A549 (cell line): ENCODE measurements at regions of chr4 and their contacts with region 1.

Region 1: DNA sequence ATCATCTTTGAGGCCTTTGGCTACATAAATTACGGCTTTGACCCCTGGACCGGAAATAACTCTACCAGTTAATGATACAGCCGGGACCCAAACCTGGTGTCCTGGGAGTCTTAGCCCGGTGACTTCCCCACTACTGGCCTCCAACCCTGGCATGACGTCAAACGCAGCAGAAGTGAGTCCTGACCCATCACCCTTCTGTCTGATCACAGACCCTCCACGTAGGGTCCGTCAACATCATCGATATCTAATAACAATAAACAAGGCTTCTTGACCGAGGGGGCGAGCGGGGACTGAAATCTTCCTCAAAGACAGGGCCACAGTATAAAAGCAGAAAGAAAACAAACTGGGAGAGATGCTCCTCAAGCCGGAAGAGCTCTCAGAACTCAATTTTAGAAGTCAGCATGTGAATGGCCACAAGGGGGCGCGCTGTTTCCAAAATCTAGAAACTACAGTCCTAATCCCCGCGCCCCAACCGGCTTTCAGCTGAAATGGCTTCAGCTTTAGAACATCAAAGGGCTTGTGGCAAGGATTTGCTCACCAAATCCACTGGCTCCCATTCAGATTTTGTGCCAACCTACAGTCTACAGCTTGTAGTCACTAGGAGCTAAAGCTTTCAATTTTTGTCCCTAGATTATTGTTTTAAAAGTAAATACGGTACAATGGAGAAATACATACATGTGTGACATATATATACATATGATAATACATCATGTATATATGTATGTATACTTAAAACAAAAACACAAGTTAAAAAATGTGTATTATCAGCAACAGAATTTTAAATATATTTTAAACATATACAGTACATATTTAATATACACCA is 46.4 kb upstream of the ENPP6 start:
- DNase-seq: peak; percentile 70 to 89
- ATAC-seq: peak; percentile 54 to 75
- H3K4me3 ChIP-seq: no peak overlapping the region
- H3K27ac ChIP-seq: no peak overlapping the region
- H3K4me1 ChIP-seq: peaks cover 21% of the 10 kb centered on the region
- CTCF ChIP-seq: peak; percentile 72
- EP300 ChIP-seq: no peak
- POLR2A ChIP-seq: no peak
- RAD21 ChIP-seq: peak; percentile 81 to 85

Region 2: GRCh38 chr4:183905081-183905592 is 359.0 kb before region 1 on chr4 and contains the start of gene STOX2:
- CTCF ChIA-PET with region 1: no interaction called
- POLR2A ChIA-PET with region 1: no interaction called
- DNase-seq: peak; percentile 71 to 73
- ATAC-seq: peak; percentile 92 to 95
- H3K4me3 ChIP-seq: peak within 1 kb of the TSS; percentile 66
- H3K27ac ChIP-seq: peak within 1 kb of the TSS; percentile 65 to 87
- H3K4me1 ChIP-seq: 0 out of 3 replicates have a peak, but pooled peaks cover 3% of the 10 kb centered on the region
- CTCF ChIP-seq: no peak
- EP300 ChIP-seq: no peak
- POLR2A ChIP-seq: peak; percentile 68
- RAD21 ChIP-seq: no peak
- polyA plus RNA-seq, gene STOX2: 5.2 and 7.0 TPM in 2 replicates

Region 3: GRCh38 chr4:184237612-184238011 is 26.5 kb before region 1 on chr4:
- CTCF ChIA-PET with region 1: no interaction called
- POLR2A ChIA-PET with region 1: no interaction called
- DNase-seq: no peak
- ATAC-seq: no peak
- H3K4me3 ChIP-seq: no peak overlapping the region
- H3K27ac ChIP-seq: no peak overlapping the region
- H3K4me1 ChIP-seq: no peaks in the 10 kb centered on the region
- CTCF ChIP-seq: no peak
- EP300 ChIP-seq: no peak
- POLR2A ChIP-seq: no peak
- RAD21 ChIP-seq: no peak

Region 4: GRCh38 chr4:184250795-184251669 is 13.1 kb before region 1 on chr4:
- CTCF ChIA-PET with region 1: interaction called, 13 read pairs
- POLR2A ChIA-PET with region 1: no interaction called
- DNase-seq: peak; percentile 22 to 58
- ATAC-seq: peak; percentile 62 to 89; a peak in 4 of 6 replicates
- H3K4me3 ChIP-seq: no peak overlapping the region
- H3K27ac ChIP-seq: no peak overlapping the region
- H3K4me1 ChIP-seq: no peaks in the 10 kb centered on the region
- CTCF ChIP-seq: peak; percentile 42
- EP300 ChIP-seq: no peak
- POLR2A ChIP-seq: no peak
- RAD21 ChIP-seq: peak; percentile 31 to 54; a peak in 3 of 5 replicates

Region 5: GRCh38 chr4:184310171-184310567 is 46.0 kb after region 1 on chr4:
- CTCF ChIA-PET with region 1: no interaction called
- POLR2A ChIA-PET with region 1: no interaction called
- DNase-seq: peak in 1 of 2 experiments; percentile 18
- ATAC-seq: peak; percentile 54 to 82; a peak in 3 of 6 replicates
- H3K4me3 ChIP-seq: no peak overlapping the region
- H3K27ac ChIP-seq: no peak overlapping the region
- H3K4me1 ChIP-seq: no peaks in the 10 kb centered on the region
- CTCF ChIP-seq: no peak
- EP300 ChIP-seq: no peak
- POLR2A ChIP-seq: no peak
- RAD21 ChIP-seq: peak; percentile 15 to 37; a peak in 2 of 5 replicates

Region 6: DNA sequence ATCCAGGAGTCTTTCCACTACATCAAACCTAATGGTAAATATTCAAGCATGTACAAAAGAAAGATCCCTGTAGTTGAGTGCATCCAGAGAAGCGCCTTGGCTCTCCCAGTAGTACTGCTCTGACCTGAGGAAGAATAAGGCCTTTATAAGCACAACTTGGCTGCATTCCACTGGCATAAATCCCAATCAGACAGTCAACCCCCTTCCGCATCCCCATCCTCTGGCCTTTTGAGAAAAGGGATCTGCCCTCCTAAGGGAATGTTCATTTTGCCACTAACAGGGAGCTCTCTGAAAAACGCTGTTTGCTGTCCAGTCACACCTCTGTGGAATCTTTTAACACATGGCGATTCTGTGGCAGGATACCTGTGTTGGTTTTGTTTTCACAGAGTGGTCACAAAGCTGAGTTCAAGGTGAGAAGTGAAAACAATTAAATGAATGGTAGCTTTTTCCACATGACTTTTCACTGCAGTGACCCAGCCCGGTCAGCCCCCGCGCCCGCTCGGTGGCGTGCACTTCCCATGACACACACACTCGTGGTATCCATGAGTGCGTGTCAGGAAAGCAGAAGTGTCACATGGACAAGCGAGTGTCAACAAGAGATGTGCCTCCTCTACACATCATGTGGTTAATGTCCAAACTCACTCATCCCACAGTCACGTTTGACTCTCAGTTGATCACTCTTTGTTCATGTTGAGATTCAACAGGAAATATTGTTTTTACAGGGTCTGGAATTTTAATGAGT is 65.7 kb after region 1 on chr4:
- CTCF ChIA-PET with region 1: no interaction called
- POLR2A ChIA-PET with region 1: no interaction called
- DNase-seq: no peak
- ATAC-seq: no peak
- H3K4me3 ChIP-seq: no peak overlapping the region
- H3K27ac ChIP-seq: no peak overlapping the region
- H3K4me1 ChIP-seq: no peaks in the 10 kb centered on the region
- CTCF ChIP-seq: no peak
- EP300 ChIP-seq: no peak
- POLR2A ChIP-seq: no peak
- RAD21 ChIP-seq: no peak

Region 7: GRCh38 chr4:184474263-184475095 is 210.4 kb after region 1 on chr4 and contains the start of gene IRF2:
- CTCF ChIA-PET with region 1: interaction called, 7 read pairs
- POLR2A ChIA-PET with region 1: interaction called, 16 read pairs
- DNase-seq: peak; percentile 81 to 93
- ATAC-seq: peak; percentile 79 to 83
- H3K4me3 ChIP-seq: peak within 1 kb of the TSS; percentile 84
- H3K27ac ChIP-seq: peak within 1 kb of the TSS; percentile 96 to 99
- H3K4me1 ChIP-seq: peaks cover 7% of the 10 kb centered on the region; the same call in 1 of the 3 replicates
- CTCF ChIP-seq: no peak
- EP300 ChIP-seq: no peak
- POLR2A ChIP-seq: no peak; the same call in 1 of the 2 replicates
- RAD21 ChIP-seq: no peak
- polyA plus RNA-seq, gene IRF2: 18.5 and 23.5 TPM in 2 replicates

Region 8: DNA sequence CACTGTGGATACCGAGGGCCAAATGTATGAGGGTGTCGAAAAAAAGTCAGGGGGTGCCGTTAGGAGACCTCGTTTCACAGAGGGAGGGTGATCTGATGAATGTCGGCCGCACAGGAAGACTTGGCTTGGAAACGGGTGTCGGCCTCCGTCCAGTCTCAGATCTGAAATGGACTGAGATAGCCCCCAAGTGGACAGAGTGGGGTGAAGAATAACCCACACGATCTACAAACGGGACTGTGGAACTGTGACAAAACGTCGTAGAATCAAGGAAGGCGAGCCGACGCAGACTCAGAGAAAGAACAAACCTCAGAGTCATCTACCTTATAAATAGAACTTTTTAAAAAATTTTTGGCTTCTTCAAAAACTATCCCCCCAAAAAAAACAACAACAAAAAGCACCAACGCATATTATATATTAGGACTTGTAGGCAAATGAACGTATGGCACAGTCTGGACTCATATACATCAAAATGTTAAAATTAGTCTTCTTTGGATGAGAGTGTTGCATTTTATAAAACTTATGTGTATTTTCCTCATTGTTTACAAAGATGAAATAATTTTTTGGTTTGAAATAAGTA is 274.0 kb after region 1 on chr4:
- CTCF ChIA-PET with region 1: interaction called, 57 read pairs
- POLR2A ChIA-PET with region 1: interaction called, 22 read pairs
- DNase-seq: peak; percentile 66 to 90
- ATAC-seq: peak; percentile 95 to 99
- H3K4me3 ChIP-seq: peak overlapping the region; percentile 71
- H3K27ac ChIP-seq: peak overlapping the region; percentile 90 to 93
- H3K4me1 ChIP-seq: peaks cover 8% of the 10 kb centered on the region; the same call in 1 of the 3 replicates
- CTCF ChIP-seq: peak; percentile 63
- EP300 ChIP-seq: no peak
- POLR2A ChIP-seq: no peak
- RAD21 ChIP-seq: peak; percentile 82 to 86

Region 9: GRCh38 chr4:184955651-184956050 is 691.5 kb after region 1 on chr4:
- CTCF ChIA-PET with region 1: no interaction called
- POLR2A ChIA-PET with region 1: interaction called, 10 read pairs
- DNase-seq: no peak
- ATAC-seq: no peak
- H3K4me3 ChIP-seq: no peak overlapping the region
- H3K27ac ChIP-seq: no peak overlapping the region
- H3K4me1 ChIP-seq: no peaks in the 10 kb centered on the region
- CTCF ChIP-seq: no peak
- EP300 ChIP-seq: no peak
- POLR2A ChIP-seq: no peak
- RAD21 ChIP-seq: no peak